Astrocyte of the cerebellum (primary cell): ENCODE measurements at regions of chr7 and their contacts with region 1.

Region 1: GRCh38 chr7:123929107-123929506 is 4.1 kb downstream of the SPAM1 start:
- DNase-seq: no peak
- H3K4me3 ChIP-seq: no peak overlapping the region
- CTCF ChIP-seq: no peak

Region 2: DNA sequence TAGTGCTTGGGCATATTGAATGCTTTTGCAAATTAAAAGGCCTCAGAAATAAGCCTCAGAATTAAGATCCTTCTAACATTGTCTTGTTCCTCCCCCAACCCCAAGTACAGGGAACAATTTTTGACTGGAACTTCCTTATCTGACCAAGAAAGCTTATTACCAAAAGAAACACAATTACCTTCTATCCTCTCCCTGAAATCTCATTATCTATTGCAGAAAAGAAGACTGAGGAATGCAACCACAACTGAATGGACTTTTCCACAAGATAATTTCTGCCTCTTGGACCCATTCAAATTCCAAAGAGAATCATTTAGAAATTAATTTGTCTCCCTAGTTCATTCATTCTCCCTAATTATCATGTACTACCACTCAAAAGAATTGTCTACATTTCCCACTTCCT is 40.9 kb before region 1 on chr7:
- in situ Hi-C with region 1: loop called (anchors 5 kb)
- DNase-seq: no peak
- H3K4me3 ChIP-seq: no peak overlapping the region
- CTCF ChIP-seq: no peak